ENCODE measurements at regions of chr20 and their contacts with region 1.

Region 1: GRCh38 chr20:59403261-59403961 is 103.0 kb downstream of the EDN3 start:
- DNase-seq: peak; percentile 95
- H3K4me3 ChIP-seq: peak overlapping the region; percentile 21 to 58
- H3K27ac ChIP-seq: peak overlapping the region in 1 of 2 experiments; percentile 50; a peak in 1 of 4 replicates
- H3K4me1 ChIP-seq: peaks cover 0 to 29% of the 10 kb centered on the region in 2 experiments; a peak in 2 of 4 replicates
- H3K27me3 ChIP-seq: peaks cover 8% of the 10 kb centered on the region; the same call in 1 of the 2 replicates
- CTCF ChIP-seq: peak; percentile 97
- EP300 ChIP-seq: peak in 1 of 2 experiments; percentile 26; a peak in 1 of 4 replicates
- RAD21 ChIP-seq: peak; percentile 91

Region 2: GRCh38 chr20:58875541-58876134 is 527.8 kb before region 1 on chr20:
- CTCF ChIA-PET with region 1: interaction called, 35 read pairs
- POLR2A ChIA-PET with region 1: no interaction called
- DNase-seq: no peak
- H3K4me3 ChIP-seq: no peak overlapping the region
- H3K27ac ChIP-seq: peak overlapping the region; percentile 24 to 75
- H3K4me1 ChIP-seq: peaks cover 0 to 55% of the 10 kb centered on the region in 2 experiments; a peak in 3 of 4 replicates
- H3K27me3 ChIP-seq: no peaks in the 10 kb centered on the region
- CTCF ChIP-seq: no peak
- EP300 ChIP-seq: no peak
- RAD21 ChIP-seq: no peak

Region 3: DNA sequence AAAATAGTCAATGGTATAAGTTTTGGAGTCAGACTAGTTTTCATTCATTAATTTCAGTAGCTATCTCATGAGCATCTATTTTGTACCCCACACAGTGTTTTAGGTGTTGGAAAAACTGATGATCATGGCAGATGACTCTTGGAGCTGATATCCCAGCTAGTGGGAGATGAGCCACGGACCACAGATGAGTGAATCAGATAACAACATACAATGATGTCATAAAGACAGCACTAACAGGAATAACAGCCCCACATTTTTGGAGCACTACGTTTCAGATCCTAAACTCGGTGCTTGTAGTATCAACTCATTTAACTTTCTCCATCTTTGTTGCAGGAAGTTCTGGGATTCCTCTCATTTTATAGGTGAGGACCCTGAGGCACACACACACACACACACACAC is 170.8 kb before region 1 on chr20:
- CTCF ChIA-PET with region 1: interaction called, 11 read pairs
- POLR2A ChIA-PET with region 1: no interaction called
- DNase-seq: no peak
- H3K4me3 ChIP-seq: no peak overlapping the region
- H3K27ac ChIP-seq: no peak overlapping the region
- H3K4me1 ChIP-seq: peaks cover 0 to 15% of the 10 kb centered on the region in 2 experiments; a peak in 2 of 4 replicates
- H3K27me3 ChIP-seq: no peaks in the 10 kb centered on the region
- CTCF ChIP-seq: no peak
- EP300 ChIP-seq: no peak
- RAD21 ChIP-seq: no peak

Region 4: DNA sequence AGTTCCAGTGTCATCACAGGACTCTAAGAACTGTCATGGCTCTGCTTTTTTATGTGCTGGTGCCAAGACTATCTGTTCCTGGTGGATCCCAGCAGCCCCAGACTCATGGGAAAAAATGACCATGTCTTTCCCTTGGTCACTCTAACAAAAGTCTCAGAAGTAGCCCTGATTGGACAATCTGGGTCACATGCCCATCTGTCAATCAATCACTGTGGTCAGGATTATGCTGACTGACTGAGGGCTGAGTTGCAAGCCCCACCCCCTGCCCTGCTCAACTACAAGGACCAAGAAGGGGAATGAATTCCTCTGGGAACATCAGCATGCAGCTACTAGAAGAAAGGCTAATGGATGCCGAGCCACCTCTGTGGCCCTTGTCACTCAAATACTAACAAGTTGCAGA is 11.4 kb before region 1 on chr20:
- CTCF ChIA-PET with region 1: interaction called, 29 read pairs
- POLR2A ChIA-PET with region 1: no interaction called
- DNase-seq: no peak
- H3K4me3 ChIP-seq: no peak overlapping the region
- H3K27ac ChIP-seq: no peak overlapping the region; a peak in 1 of 4 replicates
- H3K4me1 ChIP-seq: peaks cover 0 to 31% of the 10 kb centered on the region in 2 experiments; a peak in 1 of 4 replicates
- H3K27me3 ChIP-seq: no peaks in the 10 kb centered on the region
- CTCF ChIP-seq: no peak
- EP300 ChIP-seq: no peak
- RAD21 ChIP-seq: no peak

Region 5: DNA sequence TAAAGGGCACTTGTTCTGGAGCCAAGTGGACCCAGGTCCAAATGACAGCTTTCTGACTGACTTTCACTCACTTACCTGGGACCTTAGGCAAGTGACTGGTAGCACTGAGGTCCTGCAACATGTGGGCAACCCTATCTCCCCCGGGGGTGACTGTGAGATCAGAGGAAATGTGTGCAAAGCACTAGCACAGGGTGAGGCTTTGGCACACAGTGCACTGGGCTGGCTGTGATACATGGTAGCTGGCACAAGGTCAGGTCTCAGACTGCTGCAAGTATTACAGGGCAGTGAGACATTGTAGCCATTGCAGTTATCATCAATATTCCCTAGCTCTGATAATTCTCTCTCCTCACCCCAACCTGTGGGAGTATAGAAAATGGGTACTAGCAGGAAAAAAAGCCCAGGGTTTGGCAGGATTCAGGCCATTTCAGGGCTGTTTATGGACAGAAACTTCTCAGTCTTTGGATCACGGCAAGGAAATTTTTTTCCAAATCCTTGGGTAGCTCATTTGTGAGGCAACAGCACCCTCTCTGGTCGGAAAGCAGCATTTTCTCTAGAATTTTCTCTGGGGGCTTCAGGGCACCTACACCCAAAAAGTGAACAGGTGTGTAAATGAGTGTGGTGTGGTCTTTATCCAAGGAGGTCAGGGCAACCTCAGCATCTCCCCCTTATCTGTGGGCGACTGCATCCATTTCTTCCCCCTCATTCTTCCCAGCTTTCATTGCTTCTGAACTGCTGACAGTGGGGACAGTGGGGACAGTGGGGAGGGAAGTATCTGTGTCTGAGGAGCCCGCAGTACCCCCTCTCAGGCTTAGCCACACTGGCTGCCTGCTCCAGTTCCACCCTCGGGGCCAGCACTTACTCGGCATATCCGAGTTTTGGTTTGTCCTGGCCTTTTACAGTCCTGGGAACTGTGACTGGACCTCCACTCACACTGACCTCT is 52.3 kb after region 1 on chr20:
- CTCF ChIA-PET with region 1: interaction called, 64 read pairs
- POLR2A ChIA-PET with region 1: interaction called, 3 read pairs
- DNase-seq: peak; percentile 77
- H3K4me3 ChIP-seq: peak overlapping the region in 1 of 2 experiments; percentile 48; a peak in 1 of 4 replicates
- H3K27ac ChIP-seq: peak overlapping the region in 1 of 2 experiments; percentile 74; a peak in 2 of 4 replicates
- H3K4me1 ChIP-seq: peaks cover 0 to 24% of the 10 kb centered on the region in 2 experiments; a peak in 1 of 4 replicates
- H3K27me3 ChIP-seq: no peaks in the 10 kb centered on the region
- CTCF ChIP-seq: peak; percentile 81
- EP300 ChIP-seq: no peak
- RAD21 ChIP-seq: peak; percentile 89

Measured in SK-N-SH (cell line).